A549 (cell line): ENCODE measurements at regions of chr12 and their contacts with region 1.

Region 1: DNA sequence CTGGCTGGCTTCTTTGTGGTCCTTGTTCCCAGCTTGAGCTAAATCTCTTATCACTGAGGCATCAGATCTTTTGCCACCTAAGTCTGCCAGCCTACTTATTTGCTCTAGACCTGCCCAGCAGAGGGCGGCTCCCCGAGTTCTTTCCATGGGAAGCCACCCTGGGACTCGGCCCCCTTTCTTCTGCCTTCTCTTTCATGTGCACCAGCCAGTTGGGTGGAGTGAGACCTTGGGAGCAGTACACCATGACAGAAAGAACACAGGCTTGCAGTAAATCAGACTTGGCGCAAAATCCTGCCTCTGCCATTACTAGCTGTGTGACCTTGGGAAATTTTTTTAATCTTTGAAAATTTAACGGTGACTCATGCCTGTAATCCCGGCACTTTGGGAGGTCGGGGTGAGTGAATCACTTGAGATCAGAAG is 7.4 kb downstream of the SMAGP start:
- DNase-seq: peak; percentile 46 to 83
- ATAC-seq: peak; percentile 97 to 99
- H3K4me3 ChIP-seq: 0 out of 3 replicates have a peak overlapping the region, but pooled peaks have one; percentile 12
- H3K27ac ChIP-seq: peak overlapping the region in 1 of 2 experiments; percentile 44; a peak in 3 of 6 replicates
- H3K4me1 ChIP-seq: peaks cover 13% of the 10 kb centered on the region
- CTCF ChIP-seq: peak; percentile 66
- EP300 ChIP-seq: no peak
- POLR2A ChIP-seq: no peak
- RAD21 ChIP-seq: peak; percentile 55 to 62

Region 2: GRCh38 chr12:51132693-51133092 is 130.1 kb before region 1 on chr12:
- CTCF ChIA-PET with region 1: no interaction called
- POLR2A ChIA-PET with region 1: no interaction called
- DNase-seq: no peak
- ATAC-seq: no peak
- H3K4me3 ChIP-seq: no peak overlapping the region
- H3K27ac ChIP-seq: no peak overlapping the region
- H3K4me1 ChIP-seq: peaks cover 9% of the 10 kb centered on the region; the same call in 2 of the 3 replicates
- CTCF ChIP-seq: no peak
- EP300 ChIP-seq: no peak
- POLR2A ChIP-seq: no peak
- RAD21 ChIP-seq: no peak

Region 3: DNA sequence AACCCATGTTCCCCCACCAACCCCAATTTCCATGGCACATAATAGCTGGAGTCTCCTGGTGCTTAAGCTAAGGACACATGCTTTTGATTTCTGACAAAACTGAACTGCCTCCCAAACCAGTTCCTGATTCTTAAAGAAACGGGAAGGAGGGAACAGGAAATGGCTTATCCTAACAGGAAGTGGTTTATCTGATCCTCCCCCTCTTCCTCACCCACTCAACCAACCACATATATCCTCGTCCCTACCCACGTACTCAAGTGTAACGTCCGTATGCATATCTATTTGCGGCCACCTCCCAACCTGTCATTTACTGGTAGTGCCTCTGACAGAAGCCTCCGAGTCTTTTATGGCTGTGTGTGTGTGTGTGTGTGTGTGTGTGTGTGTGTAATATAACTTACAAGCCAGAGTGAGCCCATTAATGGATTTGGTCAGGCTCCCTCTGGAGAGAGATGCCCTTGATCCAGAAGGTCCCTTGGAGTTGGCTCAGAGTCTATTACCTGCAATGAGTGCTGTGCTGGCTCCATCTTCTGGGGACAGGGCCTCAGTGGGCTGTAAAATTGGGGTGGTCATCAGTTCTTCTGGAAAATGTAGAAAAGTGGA is 16.4 kb before region 1 on chr12:
- CTCF ChIA-PET with region 1: interaction called, 33 read pairs
- POLR2A ChIA-PET with region 1: no interaction called
- DNase-seq: no peak
- ATAC-seq: peak; percentile 40 to 44; a peak in 4 of 6 replicates
- H3K4me3 ChIP-seq: no peak overlapping the region
- H3K27ac ChIP-seq: no peak overlapping the region
- H3K4me1 ChIP-seq: no peaks in the 10 kb centered on the region
- CTCF ChIP-seq: no peak
- EP300 ChIP-seq: no peak
- POLR2A ChIP-seq: no peak
- RAD21 ChIP-seq: peak in 1 of 2 experiments; percentile 51; a peak in 2 of 5 replicates

Region 4: DNA sequence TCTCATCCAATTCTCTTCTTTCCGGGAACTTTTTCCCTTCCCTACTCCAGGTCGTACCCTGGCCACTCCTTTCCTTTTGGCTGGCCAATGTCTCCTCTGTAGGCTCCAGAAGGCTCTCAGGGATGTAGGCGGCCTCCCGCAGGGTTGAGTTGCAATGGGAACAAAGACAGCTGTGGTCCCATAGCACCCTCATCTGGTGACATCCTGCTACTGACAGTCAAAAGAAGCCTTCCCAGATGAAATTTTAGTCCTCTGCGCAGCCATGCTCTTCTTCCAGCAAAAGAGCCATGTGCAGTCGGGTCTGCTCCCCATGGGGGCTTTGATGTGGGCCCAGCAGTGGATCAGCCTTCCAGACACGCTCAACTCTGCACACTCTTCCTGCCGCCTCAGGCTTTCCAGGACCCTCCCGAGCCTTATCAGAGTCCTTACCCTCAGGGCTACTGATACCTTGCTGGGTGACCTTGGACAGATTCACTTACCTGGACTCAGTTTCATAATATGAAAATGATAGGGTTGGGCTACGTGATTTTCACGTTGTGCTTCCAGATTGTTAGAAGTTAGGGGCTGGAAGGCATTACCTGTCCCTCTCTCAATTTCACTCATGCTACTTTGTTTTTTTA is 89.3 kb after region 1 on chr12:
- CTCF ChIA-PET with region 1: interaction called, 30 read pairs
- POLR2A ChIA-PET with region 1: no interaction called
- DNase-seq: peak; percentile 46 to 76
- ATAC-seq: peak; percentile 73 to 87
- H3K4me3 ChIP-seq: no peak overlapping the region
- H3K27ac ChIP-seq: 0 out of 6 replicates have a peak overlapping the region, but pooled peaks of 1 of the 2 experiments have one; percentile 29
- H3K4me1 ChIP-seq: no peaks in the 10 kb centered on the region
- CTCF ChIP-seq: peak; percentile 64
- EP300 ChIP-seq: no peak
- POLR2A ChIP-seq: no peak
- RAD21 ChIP-seq: peak; percentile 79 to 90